ENCODE measurements at regions of chr10 and their contacts with region 1.

Region 1: GRCh38 chr10:95693668-95694534 is at the start of gene TCTN3:
- DNase-seq: peak; percentile 97
- H3K4me3 Mint-ChIP-seq: peak within 1 kb of the TSS; percentile 96
- H3K27ac Mint-ChIP-seq: peak within 1 kb of the TSS; percentile 83
- H3K4me1 Mint-ChIP-seq: peaks cover 37% of the 10 kb centered on the region
- H3K27me3 Mint-ChIP-seq: no peaks in the 10 kb centered on the region
- total RNA-seq, gene TCTN3: 17.6 to 19.2 TPM

Region 2: DNA sequence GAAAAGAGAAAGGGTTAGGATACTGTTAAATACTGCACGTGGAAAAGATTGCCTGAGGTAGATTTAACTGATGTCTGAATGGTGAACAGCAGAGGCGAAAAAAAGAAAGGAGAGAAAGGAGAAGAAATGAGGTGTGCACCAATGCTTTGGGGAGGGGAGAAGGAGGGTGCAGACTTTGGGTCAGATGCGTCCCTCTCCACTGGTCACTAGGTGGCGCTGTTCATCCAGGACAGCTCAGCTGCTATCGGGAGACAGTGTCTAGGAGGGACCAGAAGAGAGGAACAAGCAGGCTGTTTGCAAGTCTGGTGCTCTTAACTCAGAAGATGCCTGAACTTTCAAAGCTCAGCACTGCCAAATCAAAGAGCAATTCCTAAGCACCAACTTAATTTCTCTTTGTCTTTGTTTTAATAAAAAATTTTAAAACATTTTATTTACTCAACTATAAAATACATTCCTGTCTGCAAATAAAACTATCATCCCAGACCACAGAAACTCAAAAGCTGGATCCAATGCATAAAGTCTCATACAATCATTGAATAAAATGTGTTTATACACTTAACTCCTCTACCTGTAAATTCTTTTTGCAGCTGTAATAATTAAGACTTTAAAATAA is 319.2 kb before region 1 on chr10:
- CTCF ChIA-PET with region 1: interaction called, 10 read pairs
- intact Hi-C with region 1: no loop called
- DNase-seq: peak; percentile 85
- H3K4me3 Mint-ChIP-seq: no peak overlapping the region
- H3K27ac Mint-ChIP-seq: no peak overlapping the region
- H3K4me1 Mint-ChIP-seq: peaks cover 3% of the 10 kb centered on the region
- H3K27me3 Mint-ChIP-seq: peaks cover 16% of the 10 kb centered on the region

Region 3: GRCh38 chr10:95706986-95707385 is 13.1 kb after region 1 on chr10:
- CTCF ChIA-PET with region 1: interaction called, 11 read pairs
- intact Hi-C with region 1: no loop called
- DNase-seq: no peak
- H3K4me3 Mint-ChIP-seq: no peak overlapping the region
- H3K27ac Mint-ChIP-seq: no peak overlapping the region
- H3K4me1 Mint-ChIP-seq: no peaks in the 10 kb centered on the region
- H3K27me3 Mint-ChIP-seq: peaks cover 2% of the 10 kb centered on the region

Region 4: DNA sequence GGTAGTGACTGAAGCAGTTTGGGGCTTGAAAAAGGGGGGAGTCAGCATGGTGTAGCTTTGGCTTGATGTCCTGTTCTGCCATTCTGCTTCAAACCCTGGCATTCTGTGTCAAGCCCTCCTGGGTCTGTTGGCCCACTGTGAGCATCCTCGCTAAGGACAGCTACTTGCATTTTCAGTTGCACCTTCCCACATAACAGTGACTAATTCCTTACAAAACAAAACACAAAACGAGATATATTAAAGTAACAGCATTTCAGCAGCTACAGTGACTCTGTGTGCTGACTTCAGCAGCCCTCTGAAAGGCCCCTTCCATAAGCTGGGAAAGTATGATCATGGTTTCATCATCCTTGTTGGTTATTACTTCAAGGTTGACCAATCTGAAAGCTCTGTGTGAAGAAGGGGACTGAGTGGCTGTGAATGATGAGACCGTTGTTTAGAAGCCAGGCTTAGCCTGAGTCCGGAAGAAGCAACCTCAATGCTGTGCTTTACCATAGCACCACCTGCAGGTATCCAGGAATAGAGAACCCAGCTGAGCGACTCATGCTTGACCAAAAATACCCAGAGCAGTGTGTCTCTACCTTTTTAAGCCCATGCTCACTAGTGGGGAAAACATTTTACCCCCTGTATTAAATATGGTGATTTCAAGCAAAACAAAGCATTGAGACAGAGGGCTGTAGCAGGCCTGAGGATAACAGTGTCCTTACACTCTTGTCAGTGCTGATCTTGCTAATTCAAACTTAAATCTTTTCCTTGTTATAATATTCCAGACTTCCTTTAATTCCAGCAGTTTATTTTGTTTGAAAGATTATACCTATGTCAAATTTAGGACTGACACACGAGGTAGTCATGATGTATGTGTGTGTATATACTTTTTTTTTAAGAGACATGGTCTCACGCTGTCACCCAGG is 171.3 kb after region 1 on chr10:
- CTCF ChIA-PET with region 1: interaction called, 54 read pairs
- intact Hi-C with region 1: loop called (anchors 1 kb)
- DNase-seq: peak; percentile 64
- H3K4me3 Mint-ChIP-seq: no peak overlapping the region
- H3K27ac Mint-ChIP-seq: no peak overlapping the region
- H3K4me1 Mint-ChIP-seq: peaks cover 12% of the 10 kb centered on the region
- H3K27me3 Mint-ChIP-seq: no peaks in the 10 kb centered on the region

Region 5: GRCh38 chr10:95987685-95988426 is 294.0 kb after region 1 on chr10:
- CTCF ChIA-PET with region 1: no interaction called
- intact Hi-C with region 1: loop called (anchors 1 kb)
- DNase-seq: no peak
- H3K4me3 Mint-ChIP-seq: no peak overlapping the region
- H3K27ac Mint-ChIP-seq: no peak overlapping the region
- H3K4me1 Mint-ChIP-seq: no peaks in the 10 kb centered on the region
- H3K27me3 Mint-ChIP-seq: no peaks in the 10 kb centered on the region

Region 6: DNA sequence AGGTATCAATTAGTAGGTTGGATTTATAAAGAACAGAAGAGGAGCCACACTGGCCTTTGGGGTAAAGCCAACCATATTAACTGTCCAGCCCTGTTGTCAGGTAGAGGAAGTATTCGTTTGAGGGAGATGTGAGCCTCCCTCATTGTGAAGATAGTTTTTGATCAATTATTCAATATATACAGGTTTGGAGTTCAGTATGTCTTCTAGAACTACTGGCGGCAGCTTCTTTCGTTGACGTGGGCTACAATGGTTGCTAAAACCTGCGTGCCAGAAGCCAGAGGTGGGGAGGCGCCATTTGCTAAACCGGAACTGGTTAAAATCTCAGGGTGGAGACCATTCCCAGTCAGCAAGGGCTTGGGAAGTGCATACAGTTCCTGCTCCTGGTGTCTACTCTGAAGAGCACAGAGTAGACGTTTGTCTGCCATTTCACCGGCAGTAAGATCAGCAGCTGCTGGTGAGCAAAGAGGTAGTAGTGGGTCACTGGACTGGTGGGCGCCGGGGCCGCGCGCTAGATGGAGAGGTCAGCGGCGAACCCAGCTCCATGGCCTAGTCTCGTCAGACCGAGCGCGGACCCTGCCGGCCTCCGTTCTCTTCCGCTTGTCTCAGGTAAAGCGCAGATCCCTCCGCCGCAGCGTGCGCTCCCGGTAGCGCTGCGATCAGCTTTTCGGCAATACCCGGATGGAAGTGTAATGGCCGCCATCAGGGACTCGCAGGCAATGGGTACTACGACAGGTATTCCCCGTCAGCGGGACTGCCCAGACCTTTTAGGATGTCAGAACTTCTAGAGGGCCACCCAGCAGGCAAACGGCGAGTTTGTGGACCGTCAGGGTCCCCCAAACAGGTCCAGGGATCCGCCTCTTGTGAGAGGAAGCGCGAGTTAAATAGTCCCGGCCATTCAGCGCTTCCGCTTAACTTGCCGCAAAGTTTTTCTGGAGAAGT is 435.8 kb after region 1 on chr10 and contains the start of gene ZNF518A:
- CTCF ChIA-PET with region 1: no interaction called
- intact Hi-C with region 1: loop called (anchors 1 kb)
- DNase-seq: peak; percentile 91
- H3K4me3 Mint-ChIP-seq: peak within 1 kb of the TSS; percentile 97
- H3K27ac Mint-ChIP-seq: peak within 1 kb of the TSS; percentile 99
- H3K4me1 Mint-ChIP-seq: peaks cover 13% of the 10 kb centered on the region
- H3K27me3 Mint-ChIP-seq: peaks cover 30% of the 10 kb centered on the region
- total RNA-seq, gene ZNF518A: 10.7 to 12.1 TPM

Region 7: GRCh38 chr10:96339957-96340904 is 646.3 kb after region 1 on chr10:
- CTCF ChIA-PET with region 1: interaction called, 6 read pairs
- intact Hi-C with region 1: loop called (anchors 1 kb)
- DNase-seq: peak; percentile 83
- H3K4me3 Mint-ChIP-seq: no peak overlapping the region
- H3K27ac Mint-ChIP-seq: no peak overlapping the region
- H3K4me1 Mint-ChIP-seq: peaks cover 6% of the 10 kb centered on the region
- H3K27me3 Mint-ChIP-seq: no peaks in the 10 kb centered on the region

Measured in activated naive CD4-positive, alpha-beta T cell treated with anti-CD3 and anti-CD28 coated beads for 36 hours (primary cell).